Upper lobe of right lung (tissue), 1 donor: ENCODE measurements at regions of chr2 and their contacts with region 1.

Region 1: DNA sequence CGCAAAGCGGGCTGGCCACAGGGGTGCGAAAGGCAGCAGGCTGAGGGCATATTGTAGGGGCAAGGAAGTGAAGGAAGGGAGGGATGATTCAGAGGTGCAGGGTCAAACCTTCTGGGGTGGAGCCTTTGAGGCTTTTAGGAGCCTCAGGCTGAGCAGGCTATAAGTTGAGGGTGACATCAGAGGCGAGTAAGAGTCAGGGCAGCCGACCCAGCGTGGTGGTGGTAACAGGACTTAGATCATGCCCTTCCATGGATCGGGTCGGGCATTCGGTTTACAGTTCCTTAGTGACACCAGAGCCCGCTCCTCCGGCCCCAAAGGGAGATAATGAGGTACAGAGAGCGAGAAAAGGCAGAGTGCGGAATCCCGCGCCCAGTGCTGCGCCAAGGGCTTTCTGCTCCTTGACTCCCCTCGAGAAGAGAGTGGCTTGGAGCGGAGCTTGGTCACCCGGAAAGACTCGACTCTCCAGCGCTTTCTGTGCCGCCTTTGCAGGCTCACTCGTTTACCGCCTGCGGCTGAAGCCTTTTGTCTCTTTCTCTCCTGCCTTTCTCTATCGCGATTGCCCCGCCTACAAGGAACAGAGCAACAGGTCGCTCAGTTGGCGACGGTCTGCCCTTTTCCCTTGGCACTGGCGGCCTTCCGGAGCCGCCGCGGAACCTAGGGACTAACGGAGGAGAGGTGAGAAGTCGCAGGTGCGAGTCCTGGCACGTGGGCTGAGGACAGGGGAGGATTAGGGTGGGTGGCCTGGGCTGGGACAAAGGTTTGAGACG is 720 bp downstream of the LBX2 start:
- DNase-seq: no peak
- ATAC-seq: peak; percentile 1
- H3K4me3 ChIP-seq: peak overlapping the region; percentile 44
- H3K27ac ChIP-seq: no peak overlapping the region
- H3K4me1 ChIP-seq: peaks cover 34% of the 10 kb centered on the region
- H3K27me3 ChIP-seq: peaks cover 41% of the 10 kb centered on the region
- CTCF ChIP-seq: no peak

Region 2: DNA sequence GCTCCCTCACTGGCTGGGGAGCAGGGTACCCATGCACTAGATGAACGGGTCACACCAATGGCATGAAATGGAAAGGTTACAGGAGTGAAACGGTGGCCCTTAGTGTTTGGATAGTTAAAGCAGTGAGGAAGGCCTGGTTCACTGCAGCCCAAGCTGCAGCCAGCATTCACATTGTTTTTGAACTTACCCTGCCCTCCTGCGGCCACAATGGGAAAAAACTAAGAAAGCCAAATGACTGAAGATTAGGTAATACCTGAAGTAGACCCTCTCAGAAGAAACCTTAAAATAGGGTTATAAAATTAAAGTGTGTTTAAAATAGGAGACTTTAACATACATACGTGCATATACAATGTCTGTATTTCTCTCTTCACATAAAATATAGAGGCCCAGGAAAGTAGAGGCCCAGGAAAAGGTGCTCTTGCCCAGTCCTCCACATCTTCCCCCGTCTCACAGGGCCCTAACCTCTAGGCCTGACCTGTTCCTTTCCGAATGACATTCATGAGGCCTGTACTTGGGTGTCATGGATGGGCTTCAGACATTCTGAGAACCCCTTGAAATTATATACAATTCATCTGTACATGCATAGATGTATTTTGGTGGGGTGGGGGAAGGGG is 89.1 kb after region 1 on chr2:
- intact Hi-C with region 1: loop called (anchors 10 kb)
- DNase-seq: no peak
- ATAC-seq: peak; percentile 97
- H3K4me3 ChIP-seq: no peak overlapping the region
- H3K27ac ChIP-seq: no peak overlapping the region
- H3K4me1 ChIP-seq: no peaks in the 10 kb centered on the region
- H3K27me3 ChIP-seq: peaks cover 12% of the 10 kb centered on the region
- CTCF ChIP-seq: peak; percentile 77